ENCODE measurements at regions of chr16 and their contacts with region 1.

Region 1: GRCh38 chr16:81737885-81738786 is 41.0 kb upstream of the PLCG2 start:
- DNase-seq: peak; percentile 69 to 88 (median 83)
- ATAC-seq: peak; percentile 95
- H3K4me3 ChIP-seq: peak overlapping the region; percentile 28
- H3K4me3 Mint-ChIP-seq: peak overlapping the region; percentile 67 to 81 (median 76)
- H3K27ac ChIP-seq: no peak overlapping the region
- H3K27ac Mint-ChIP-seq: peak overlapping the region in 6 of 9 donors; percentile 34 to 75 (median 42)
- H3K4me1 ChIP-seq: peaks cover 0 to 3% of the 10 kb centered on the region in 2 donors
- H3K4me1 Mint-ChIP-seq: peaks cover 0 to 18% (median 5%) of the 10 kb centered on the region in 7 donors
- H3K27me3 ChIP-seq: no peaks in the 10 kb centered on the region
- H3K27me3 Mint-ChIP-seq: peaks cover 0 to 2% (median 0%) of the 10 kb centered on the region in 5 donors

Region 2: DNA sequence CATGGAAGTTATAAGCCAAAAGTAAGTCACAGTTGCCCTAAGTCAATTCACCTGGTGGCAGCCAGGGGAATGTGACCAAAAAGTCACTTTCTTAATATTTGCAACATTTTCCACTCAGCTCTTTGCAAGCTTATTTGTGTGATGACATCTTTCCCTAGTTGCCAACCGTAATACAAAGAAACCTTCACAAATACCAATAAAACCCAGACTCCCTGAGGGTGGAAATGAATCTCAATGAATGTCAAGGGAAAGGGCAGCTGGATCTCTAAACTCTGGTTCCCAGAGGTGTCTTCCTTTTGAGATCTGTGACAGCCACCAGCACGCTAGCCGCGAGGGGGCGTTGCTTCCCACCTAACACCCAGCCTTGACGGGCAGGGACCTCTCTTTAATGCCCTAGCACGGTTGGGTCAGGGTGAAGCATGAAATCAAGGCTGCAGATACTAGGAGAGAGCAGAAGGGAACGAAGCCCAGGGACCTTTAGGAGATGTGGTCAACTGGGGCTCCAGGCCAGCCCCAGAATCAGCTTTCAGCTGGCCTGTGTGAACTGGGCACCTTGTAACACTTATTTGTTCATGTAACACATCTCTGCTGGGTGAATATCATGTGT is 813.7 kb before region 1 on chr16:
- CTCF ChIA-PET with region 1: no interaction called
- POLR2A ChIA-PET with region 1: no interaction called
- intact Hi-C with region 1: loop called in 1 of 2 experiments (anchors 5 kb)
- DNase-seq: peak in 4 of 9 donors; percentile 5 to 37 (median 14)
- ATAC-seq: no peak
- H3K4me3 ChIP-seq: no peak overlapping the region
- H3K4me3 Mint-ChIP-seq: no peak overlapping the region
- H3K27ac ChIP-seq: no peak overlapping the region
- H3K27ac Mint-ChIP-seq: no peak overlapping the region
- H3K4me1 ChIP-seq: no peaks in the 10 kb centered on the region
- H3K4me1 Mint-ChIP-seq: no peaks in the 10 kb centered on the region
- H3K27me3 ChIP-seq: no peaks in the 10 kb centered on the region
- H3K27me3 Mint-ChIP-seq: peaks cover 0 to 29% (median 22%) of the 10 kb centered on the region in 5 donors

Region 3: GRCh38 chr16:81204798-81205680 is 533.1 kb before region 1 on chr16:
- CTCF ChIA-PET with region 1: interaction called, 15 read pairs
- POLR2A ChIA-PET with region 1: no interaction called
- intact Hi-C with region 1: loop called in 1 of 2 experiments (anchors 1 kb)
- DNase-seq: peak in 5 of 9 donors; percentile 10 to 43 (median 33)
- ATAC-seq: peak; percentile 45
- H3K4me3 ChIP-seq: no peak overlapping the region
- H3K4me3 Mint-ChIP-seq: no peak overlapping the region
- H3K27ac ChIP-seq: no peak overlapping the region
- H3K27ac Mint-ChIP-seq: no peak overlapping the region
- H3K4me1 ChIP-seq: no peaks in the 10 kb centered on the region
- H3K4me1 Mint-ChIP-seq: peaks cover 0 to 7% (median 4%) of the 10 kb centered on the region in 7 donors
- H3K27me3 ChIP-seq: no peaks in the 10 kb centered on the region
- H3K27me3 Mint-ChIP-seq: peaks cover 10 to 19% (median 17%) of the 10 kb centered on the region in 5 donors

Region 4: DNA sequence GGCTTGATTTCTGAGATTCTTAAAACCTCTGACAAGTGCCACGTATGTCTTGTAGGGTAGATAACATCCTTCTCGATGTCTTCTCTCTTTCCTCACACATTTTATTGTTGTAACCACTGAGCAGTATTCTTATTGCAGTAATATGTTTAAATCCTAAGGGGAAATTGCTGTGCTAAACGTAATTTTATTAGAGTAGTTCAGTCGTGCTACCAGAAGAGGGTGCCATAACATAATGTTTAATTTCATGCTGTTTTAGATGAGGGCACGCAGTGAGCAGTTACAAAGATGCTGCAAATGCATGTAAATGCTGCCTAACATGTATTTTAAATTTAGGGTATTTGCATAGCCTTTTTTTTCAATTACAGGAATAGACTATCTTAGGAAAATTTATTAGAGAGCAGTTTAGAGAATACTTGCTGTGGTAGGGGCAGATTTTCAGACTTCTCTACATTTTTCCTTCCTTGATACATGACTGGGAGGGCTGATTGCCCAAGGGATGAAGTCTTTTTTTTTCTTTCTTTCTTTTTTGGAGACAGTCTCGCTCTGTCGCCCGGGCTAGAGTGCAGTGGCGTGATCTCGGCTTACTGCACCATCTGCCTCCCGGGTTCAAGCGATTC is 371.7 kb before region 1 on chr16:
- CTCF ChIA-PET with region 1: interaction called, 11 read pairs
- POLR2A ChIA-PET with region 1: no interaction called
- intact Hi-C with region 1: loop called (anchors 1 kb)
- DNase-seq: peak in 7 of 9 donors; percentile 20 to 62 (median 52)
- ATAC-seq: peak; percentile 86
- H3K4me3 ChIP-seq: no peak overlapping the region
- H3K4me3 Mint-ChIP-seq: no peak overlapping the region
- H3K27ac ChIP-seq: no peak overlapping the region
- H3K27ac Mint-ChIP-seq: no peak overlapping the region
- H3K4me1 ChIP-seq: no peaks in the 10 kb centered on the region
- H3K4me1 Mint-ChIP-seq: peaks cover 0 to 3% (median 0%) of the 10 kb centered on the region in 7 donors
- H3K27me3 ChIP-seq: no peaks in the 10 kb centered on the region
- H3K27me3 Mint-ChIP-seq: no peaks in the 10 kb centered on the region

Region 5: DNA sequence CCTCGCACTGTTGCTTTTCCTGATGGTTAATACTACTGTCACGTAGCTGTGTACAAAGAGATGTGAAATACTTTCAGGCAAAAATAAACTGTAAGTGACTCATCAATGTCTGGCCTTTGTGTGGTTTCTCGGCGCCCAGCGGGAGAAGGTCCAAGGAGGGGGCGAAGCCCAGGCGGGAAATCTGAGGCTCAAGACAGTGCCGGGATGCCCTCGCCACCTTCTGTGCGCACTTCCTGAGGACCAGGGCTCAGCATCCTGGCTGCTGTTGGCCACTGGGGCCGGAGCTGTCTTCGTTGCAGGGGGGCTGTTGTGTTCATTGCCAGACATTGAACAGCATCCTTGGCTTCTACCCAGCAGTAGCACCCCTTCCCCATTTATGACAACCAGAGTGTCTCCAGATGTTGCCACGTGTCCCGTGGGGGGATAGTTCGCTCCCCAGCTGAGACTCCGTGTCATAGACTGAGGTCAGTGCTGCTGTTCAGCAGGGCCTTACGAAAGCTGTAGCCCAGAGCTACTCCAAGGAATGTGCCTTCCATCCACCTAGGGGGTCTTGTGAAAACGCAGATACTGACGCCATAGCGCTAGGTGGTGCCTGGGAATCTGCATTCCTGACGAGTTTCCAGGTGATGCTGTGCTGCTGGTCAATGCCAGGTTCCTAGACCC is 26.3 kb before region 1 on chr16:
- CTCF ChIA-PET with region 1: no interaction called
- POLR2A ChIA-PET with region 1: no interaction called
- intact Hi-C with region 1: no loop called
- DNase-seq: no peak
- ATAC-seq: no peak
- H3K4me3 ChIP-seq: no peak overlapping the region
- H3K4me3 Mint-ChIP-seq: no peak overlapping the region
- H3K27ac ChIP-seq: no peak overlapping the region
- H3K27ac Mint-ChIP-seq: peak overlapping the region in 4 of 9 donors; percentile 2 to 65 (median 38)
- H3K4me1 ChIP-seq: peaks cover 16 to 22% of the 10 kb centered on the region in 2 donors
- H3K4me1 Mint-ChIP-seq: peaks cover 22 to 30% (median 26%) of the 10 kb centered on the region in 7 donors
- H3K27me3 ChIP-seq: no peaks in the 10 kb centered on the region
- H3K27me3 Mint-ChIP-seq: no peaks in the 10 kb centered on the region

Region 6: GRCh38 chr16:81723098-81723723 is 14.9 kb before region 1 on chr16:
- CTCF ChIA-PET with region 1: interaction called, 6 read pairs
- POLR2A ChIA-PET with region 1: no interaction called
- intact Hi-C with region 1: loop called in 1 of 2 experiments (anchors 1 kb)
- DNase-seq: peak in 7 of 9 donors; percentile 51 to 72 (median 69)
- ATAC-seq: peak; percentile 86
- H3K4me3 ChIP-seq: no peak overlapping the region
- H3K4me3 Mint-ChIP-seq: no peak overlapping the region
- H3K27ac ChIP-seq: no peak overlapping the region
- H3K27ac Mint-ChIP-seq: peak overlapping the region in 2 of 9 donors; percentile 19 to 67
- H3K4me1 ChIP-seq: no peaks in the 10 kb centered on the region
- H3K4me1 Mint-ChIP-seq: peaks cover 6 to 21% (median 12%) of the 10 kb centered on the region in 7 donors
- H3K27me3 ChIP-seq: no peaks in the 10 kb centered on the region
- H3K27me3 Mint-ChIP-seq: peaks cover 0 to 4% (median 0%) of the 10 kb centered on the region in 5 donors

Measured in naive thymus-derived CD4-positive, alpha-beta T cell (primary cell).